ENCODE measurements at regions of chr7 and their contacts with region 1.

Region 1: DNA sequence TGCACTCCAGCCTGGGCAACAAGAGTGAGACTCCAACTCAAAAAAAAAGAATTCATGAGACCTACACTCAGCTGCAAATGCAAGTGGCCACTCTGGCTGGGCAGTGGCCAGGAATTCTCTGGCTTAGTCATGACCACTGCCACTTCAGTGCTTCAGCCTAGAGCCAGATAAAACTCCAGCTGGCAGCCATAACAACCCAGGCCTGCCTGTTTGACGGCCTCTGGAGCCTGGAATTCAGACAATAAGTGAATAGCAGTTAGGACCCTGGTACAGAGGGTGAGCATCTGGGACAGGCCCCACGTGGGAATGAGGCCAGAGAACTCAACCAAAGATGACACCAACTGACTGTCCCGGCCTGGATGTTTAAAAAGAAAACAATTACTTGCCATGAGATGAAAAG is 18.9 kb downstream of the RCC1L start:
- DNase-seq: no peak
- H3K4me3 ChIP-seq: no peak overlapping the region
- H3K4me1 ChIP-seq: no peaks in the 10 kb centered on the region
- H3K27me3 ChIP-seq: no peaks in the 10 kb centered on the region

Region 2: DNA sequence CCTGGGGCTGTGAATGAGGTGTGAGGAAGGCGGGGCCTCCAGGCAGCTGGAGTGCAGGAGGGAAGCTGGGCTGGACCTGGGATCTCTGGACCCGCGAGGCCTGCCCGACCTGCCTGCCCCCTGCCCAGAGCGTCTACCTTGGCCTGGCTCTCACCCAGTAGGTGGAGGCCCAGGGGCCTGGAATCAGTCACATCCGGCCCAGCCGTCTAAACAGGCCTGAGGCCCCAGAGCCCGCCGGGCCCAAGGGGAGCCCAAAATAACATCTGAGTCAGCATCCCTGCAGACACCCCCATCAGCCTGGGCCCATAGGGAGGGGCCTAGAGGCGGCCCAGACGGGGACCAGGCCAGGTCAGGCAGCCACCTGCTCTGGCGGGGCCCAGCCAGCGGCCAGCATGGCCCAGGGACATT is 1041.9 kb before region 1 on chr7:
- in situ Hi-C with region 1: no loop called
- DNase-seq: no peak
- H3K4me3 ChIP-seq: no peak overlapping the region
- H3K4me1 ChIP-seq: no peaks in the 10 kb centered on the region
- H3K27me3 ChIP-seq: no peaks in the 10 kb centered on the region

Region 3: GRCh38 chr7:75762314-75762917 is 707.7 kb after region 1 on chr7:
- in situ Hi-C with region 1: loop called (anchors 25 kb)
- DNase-seq: peak in 1 of 2 experiments; percentile 83
- H3K4me3 ChIP-seq: no peak overlapping the region
- H3K4me1 ChIP-seq: 0 out of 2 replicates have a peak, but pooled peaks cover 2% of the 10 kb centered on the region
- H3K27me3 ChIP-seq: no peaks in the 10 kb centered on the region

Measured in HAP-1 (cell line).